ENCODE measurements at regions of chr14 and their contacts with region 1.

Region 1: DNA sequence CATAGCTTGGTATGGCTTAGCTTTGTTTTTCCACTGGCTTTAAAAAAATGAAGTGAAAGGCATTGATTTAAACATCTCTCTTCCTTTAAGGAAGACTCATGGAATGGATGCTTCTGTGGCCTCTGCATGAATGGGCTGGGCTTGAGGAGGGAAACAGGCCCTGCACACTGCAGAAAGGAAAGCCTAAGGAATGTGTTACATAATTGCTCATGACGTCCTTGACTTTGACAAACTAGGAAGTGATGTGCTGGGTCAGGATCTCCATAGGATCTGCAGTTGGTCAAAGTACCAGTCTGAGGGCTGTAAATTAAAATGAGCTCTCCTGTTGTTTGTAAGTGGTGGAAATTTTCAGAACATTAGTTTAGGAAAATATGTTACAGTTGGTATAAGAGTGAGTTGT is 12.7 kb downstream of the SAMD4A start:
- DNase-seq: no peak
- H3K4me3 ChIP-seq: no peak overlapping the region
- H3K27ac ChIP-seq: no peak overlapping the region
- H3K4me1 ChIP-seq: peaks cover 25% of the 10 kb centered on the region
- H3K27me3 ChIP-seq: no peaks in the 10 kb centered on the region
- CTCF ChIP-seq: no peak
- POLR2A ChIP-seq: no peak

Region 2: DNA sequence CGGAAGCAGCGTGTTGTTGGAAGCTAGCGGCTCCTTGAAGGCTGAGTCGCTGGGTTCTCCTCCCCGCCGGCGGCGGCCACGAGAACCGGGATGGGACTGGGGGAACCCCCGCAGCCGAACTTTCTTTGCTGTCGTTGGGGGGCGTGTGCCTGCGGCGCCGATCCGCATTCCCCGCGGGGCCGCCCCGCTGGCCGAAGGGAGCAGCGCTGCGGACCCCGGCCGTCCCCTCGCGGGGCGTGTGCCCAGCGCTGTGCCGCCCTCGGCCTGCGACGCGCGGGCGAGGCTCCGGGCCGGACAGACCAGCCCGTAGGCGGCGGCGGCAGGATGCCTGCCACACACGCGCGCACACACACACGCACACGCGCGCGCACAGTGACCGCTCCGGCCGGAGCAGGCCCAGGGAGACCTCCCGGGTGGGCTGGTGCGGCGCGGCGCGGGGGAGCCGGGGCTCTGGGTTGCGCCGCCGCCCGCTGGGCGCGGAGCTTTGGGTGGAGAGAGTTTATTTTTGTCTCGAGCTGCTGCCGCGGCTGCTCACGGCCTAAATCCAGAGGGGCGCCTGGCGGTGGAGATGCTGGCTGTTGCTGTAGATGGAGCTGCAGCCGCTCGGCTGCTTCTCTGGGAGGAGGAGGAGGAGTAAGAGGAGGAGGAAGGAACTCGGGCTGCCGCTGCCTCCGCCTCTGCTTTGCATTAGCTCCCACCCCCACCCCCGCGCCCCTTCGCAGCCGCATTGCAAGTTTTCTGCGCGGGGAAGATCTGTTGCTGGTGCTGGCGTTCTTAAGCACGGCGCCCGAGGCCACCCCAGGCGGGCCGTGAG is 13.0 kb before region 1 on chr14 and contains the start of gene SAMD4A:
- intact Hi-C with region 1: no loop called
- DNase-seq: peak in 1 of 2 donors; percentile 92
- H3K4me3 ChIP-seq: peak within 1 kb of the TSS; percentile 75 to 86
- H3K27ac ChIP-seq: peak within 1 kb of the TSS; percentile 99
- H3K4me1 ChIP-seq: peaks cover 39% of the 10 kb centered on the region
- H3K27me3 ChIP-seq: no peaks in the 10 kb centered on the region
- CTCF ChIP-seq: peak in 1 of 3 experiments; percentile 29
- POLR2A ChIP-seq: peak in 1 of 2 donors; percentile 58
- total RNA-seq, gene SAMD4A: 43.0 TPM

Region 3: DNA sequence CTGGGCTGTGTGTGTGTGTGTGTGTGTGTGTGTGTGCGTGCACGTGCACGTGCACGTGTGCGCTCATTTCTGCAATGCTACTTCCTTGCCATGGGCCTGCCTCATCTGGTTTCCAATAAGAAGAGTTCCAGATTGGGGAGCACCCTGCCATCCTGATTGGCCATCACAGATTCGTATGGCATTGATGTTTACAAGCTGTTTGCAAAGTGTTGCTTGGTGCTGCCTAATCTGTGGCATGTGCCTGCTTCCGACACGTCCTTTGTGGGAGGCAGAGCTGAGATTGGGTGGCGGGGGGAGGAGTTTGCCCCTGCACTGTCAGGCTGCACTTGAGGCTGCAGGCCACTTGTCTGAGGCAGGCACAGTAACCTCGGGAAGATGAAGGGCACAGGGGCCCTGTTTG is 26.6 kb after region 1 on chr14:
- intact Hi-C with region 1: loop called (anchors 1 kb)
- DNase-seq: no peak
- H3K4me3 ChIP-seq: no peak overlapping the region
- H3K27ac ChIP-seq: no peak overlapping the region
- H3K4me1 ChIP-seq: peaks cover 15% of the 10 kb centered on the region
- H3K27me3 ChIP-seq: no peaks in the 10 kb centered on the region
- CTCF ChIP-seq: no peak
- POLR2A ChIP-seq: no peak